OCI-LY7 (cell line): ENCODE measurements at regions of chr11 and their contacts with region 1.

Region 1: GRCh38 chr11:128552783-128553661 is 34.3 kb downstream of the ETS1 start:
- DNase-seq: peak; percentile 97
- H3K4me3 ChIP-seq: peak overlapping the region; percentile 61
- H3K27ac ChIP-seq: peak overlapping the region; percentile 97
- H3K4me1 ChIP-seq: peaks cover 80% of the 10 kb centered on the region
- CTCF ChIP-seq: no peak

Region 2: GRCh38 chr11:128472128-128473089 is 80.6 kb before region 1 on chr11:
- CTCF ChIA-PET with region 1: interaction called, 4 read pairs
- POLR2A ChIA-PET with region 1: interaction called, 47 read pairs
- intact Hi-C with region 1: loop called (anchors 1 kb)
- DNase-seq: peak; percentile 61
- H3K4me3 ChIP-seq: peak overlapping the region; percentile 51
- H3K27ac ChIP-seq: peak overlapping the region; percentile 98
- H3K4me1 ChIP-seq: peaks cover 100% of the 10 kb centered on the region
- CTCF ChIP-seq: no peak

Region 3: DNA sequence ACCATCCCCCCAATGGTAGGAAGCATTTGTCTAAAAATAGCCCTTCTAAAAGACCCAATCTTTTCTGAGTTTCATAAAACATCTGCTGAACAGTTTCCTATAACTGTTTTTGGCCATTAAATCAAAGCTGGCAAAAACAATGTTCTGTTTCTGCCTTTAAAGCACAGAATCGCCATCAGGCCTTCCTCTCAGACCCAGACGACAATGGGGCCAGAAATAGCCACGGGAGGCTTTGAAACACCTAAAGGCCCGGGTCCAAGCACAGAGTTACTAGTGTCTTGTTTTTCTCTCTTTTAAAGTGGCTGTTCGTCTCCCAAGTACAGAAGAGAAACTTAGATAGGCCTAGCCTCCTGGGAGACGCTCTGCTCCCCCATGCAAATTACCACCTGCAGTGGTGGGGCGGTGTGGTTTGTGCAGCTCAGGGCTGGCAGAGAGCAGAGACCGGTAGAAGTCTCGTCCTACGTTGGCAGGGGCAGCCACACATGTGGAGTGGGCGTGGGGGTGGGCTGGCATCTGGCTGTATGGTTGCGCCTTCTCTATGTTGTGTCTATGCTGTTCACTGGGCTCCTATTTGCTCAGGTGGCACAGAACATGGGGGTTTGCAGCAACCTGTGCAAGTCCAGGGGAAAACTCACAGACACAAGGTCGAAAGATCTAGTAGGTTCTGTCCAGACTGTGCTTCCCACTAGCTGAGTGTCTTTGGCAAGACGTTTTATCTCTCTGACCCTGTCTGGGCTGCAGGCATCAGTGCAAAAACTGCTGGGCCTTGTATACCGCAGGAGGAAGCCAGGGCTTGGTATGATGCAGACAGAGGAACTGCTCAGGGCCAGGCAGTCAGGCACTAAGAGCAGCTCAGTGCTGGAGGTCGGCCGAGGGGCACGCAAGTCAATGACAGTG is 57.9 kb after region 1 on chr11:
- CTCF ChIA-PET with region 1: interaction called, 6 read pairs
- POLR2A ChIA-PET with region 1: interaction called, 108 read pairs
- intact Hi-C with region 1: loop called (anchors 1 kb)
- DNase-seq: peak; percentile 98
- H3K4me3 ChIP-seq: peak overlapping the region; percentile 45
- H3K27ac ChIP-seq: peak overlapping the region; percentile 99
- H3K4me1 ChIP-seq: peaks cover 93% of the 10 kb centered on the region
- CTCF ChIP-seq: no peak

Region 4: DNA sequence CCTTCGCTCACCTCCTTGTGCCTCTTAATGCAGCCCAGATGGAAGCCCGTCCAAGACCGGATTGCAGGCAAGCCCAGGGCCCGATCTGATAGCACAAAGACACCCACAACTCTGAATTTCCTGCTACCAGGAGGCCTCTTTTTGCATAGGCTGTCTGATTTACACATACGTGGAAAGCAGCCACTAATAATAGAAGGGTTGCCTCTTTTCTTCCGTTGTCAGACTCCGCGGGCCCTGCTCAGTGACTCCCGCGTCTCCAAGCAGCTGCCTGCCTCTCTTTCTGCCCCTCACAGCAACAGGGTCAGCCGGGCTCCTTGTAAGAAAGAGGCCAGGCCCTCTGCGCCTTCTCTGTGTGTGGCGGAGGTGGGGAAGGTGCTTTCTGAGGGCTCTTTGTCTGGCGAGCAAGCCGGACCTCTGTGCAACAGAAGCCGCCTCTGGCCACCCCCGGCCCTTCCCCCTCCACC is 167.5 kb after region 1 on chr11:
- CTCF ChIA-PET with region 1: interaction called, 3 read pairs
- POLR2A ChIA-PET with region 1: interaction called, 6 read pairs
- intact Hi-C with region 1: loop called (anchors 2 kb)
- DNase-seq: peak; percentile 90
- H3K4me3 ChIP-seq: peak overlapping the region; percentile 70
- H3K27ac ChIP-seq: peak overlapping the region; percentile 99
- H3K4me1 ChIP-seq: peaks cover 93% of the 10 kb centered on the region
- CTCF ChIP-seq: no peak